ENCODE measurements at regions of chr1 and their contacts with region 1.

Region 1: DNA sequence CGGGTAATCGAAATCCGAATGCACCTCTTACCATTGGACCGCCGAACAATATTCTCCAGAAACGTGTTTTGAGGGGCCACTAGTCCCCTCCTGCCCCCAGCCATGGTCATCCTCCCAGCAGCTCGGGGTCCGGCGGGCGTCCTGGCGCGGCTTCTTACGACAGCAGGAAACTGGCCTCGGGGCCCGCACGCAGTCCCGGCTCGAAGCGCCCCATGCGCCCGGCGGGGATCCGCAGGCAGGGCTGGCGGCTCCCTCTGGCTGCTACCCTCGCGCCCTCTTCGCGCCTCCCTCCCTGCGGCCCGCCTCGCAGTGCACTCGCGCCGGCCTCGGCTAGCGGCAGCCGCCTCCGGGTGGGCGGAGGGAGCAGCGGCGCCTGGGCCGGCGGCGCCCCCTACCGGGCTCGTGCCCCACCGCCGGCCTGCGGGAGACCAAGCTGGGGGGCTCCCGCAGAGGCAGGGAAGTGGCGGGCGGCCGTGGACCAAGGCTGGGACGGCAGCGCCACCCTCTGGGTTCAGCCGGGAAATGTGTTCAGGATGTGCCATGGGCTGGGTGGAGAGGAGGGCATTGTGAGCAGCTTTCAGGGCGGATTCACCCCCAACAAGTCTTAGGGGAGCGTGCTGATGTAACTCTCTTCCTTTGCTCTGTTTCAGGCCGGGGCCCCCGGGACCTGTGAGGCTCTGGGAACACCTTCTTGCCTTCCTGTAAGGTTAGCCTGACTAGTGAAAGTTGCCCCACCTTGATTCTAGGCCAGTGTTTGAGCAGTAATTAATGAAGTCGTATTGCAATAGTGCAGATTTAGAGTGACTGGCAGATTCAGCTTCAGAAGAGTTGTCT is at the start of gene KCNH1:
- DNase-seq: peak; percentile 78 to 86
- ATAC-seq: peak; percentile 95
- H3K4me3 ChIP-seq: peak within 1 kb of the TSS; percentile 67
- H3K27ac ChIP-seq: peak within 1 kb of the TSS; percentile 89 to 93
- H3K4me1 ChIP-seq: peaks cover 20% of the 10 kb centered on the region
- CTCF ChIP-seq: peak; percentile 100
- EP300 ChIP-seq: peak in 1 of 2 experiments; percentile 32; a peak in 1 of 5 replicates
- POLR2A ChIP-seq: no peak
- RAD21 ChIP-seq: peak; percentile 96 to 100
- polyA plus RNA-seq, gene KCNH1: 7.9 and 8.4 TPM in 2 replicates

Region 2: GRCh38 chr1:210400043-210400840 is 733.8 kb before region 1 on chr1:
- CTCF ChIA-PET with region 1: interaction called, 388 read pairs
- POLR2A ChIA-PET with region 1: no interaction called
- DNase-seq: peak; percentile 71 to 88
- ATAC-seq: peak; percentile 98 to 100
- H3K4me3 ChIP-seq: no peak overlapping the region
- H3K27ac ChIP-seq: no peak overlapping the region
- H3K4me1 ChIP-seq: no peaks in the 10 kb centered on the region; the same call in 2 of the 3 replicates
- CTCF ChIP-seq: peak; percentile 87
- EP300 ChIP-seq: no peak
- POLR2A ChIP-seq: no peak
- RAD21 ChIP-seq: peak; percentile 85 to 88

Region 3: GRCh38 chr1:210448297-210448892 is 685.7 kb before region 1 on chr1:
- CTCF ChIA-PET with region 1: interaction called, 270 read pairs
- POLR2A ChIA-PET with region 1: interaction called, 15 read pairs
- DNase-seq: peak; percentile 36 to 58
- ATAC-seq: peak; percentile 59 to 90; a peak in 4 of 6 replicates
- H3K4me3 ChIP-seq: no peak overlapping the region
- H3K27ac ChIP-seq: peak overlapping the region; percentile 18 to 72; a peak in 4 of 6 replicates
- H3K4me1 ChIP-seq: peaks cover 30% of the 10 kb centered on the region
- CTCF ChIP-seq: peak; percentile 89
- EP300 ChIP-seq: no peak
- POLR2A ChIP-seq: no peak
- RAD21 ChIP-seq: peak; percentile 92

Region 4: GRCh38 chr1:210568631-210569030 is 565.4 kb before region 1 on chr1:
- CTCF ChIA-PET with region 1: interaction called, 34 read pairs
- POLR2A ChIA-PET with region 1: no interaction called
- DNase-seq: peak in 1 of 2 experiments; percentile 29
- ATAC-seq: no peak
- H3K4me3 ChIP-seq: no peak overlapping the region
- H3K27ac ChIP-seq: peak overlapping the region; percentile 24 to 26; a peak in 2 of 6 replicates
- H3K4me1 ChIP-seq: peaks cover 6% of the 10 kb centered on the region
- CTCF ChIP-seq: no peak
- EP300 ChIP-seq: no peak
- POLR2A ChIP-seq: no peak
- RAD21 ChIP-seq: no peak

Region 5: GRCh38 chr1:210696709-210697108 is 437.3 kb before region 1 on chr1:
- CTCF ChIA-PET with region 1: interaction called, 15 read pairs
- POLR2A ChIA-PET with region 1: no interaction called
- DNase-seq: no peak
- ATAC-seq: peak in 1 of 2 experiments; percentile 52; a peak in 2 of 6 replicates
- H3K4me3 ChIP-seq: no peak overlapping the region
- H3K27ac ChIP-seq: peak overlapping the region in 1 of 2 experiments; percentile 34; a peak in 1 of 6 replicates
- H3K4me1 ChIP-seq: peaks cover 17% of the 10 kb centered on the region; the same call in 2 of the 3 replicates
- CTCF ChIP-seq: no peak
- EP300 ChIP-seq: no peak
- POLR2A ChIP-seq: no peak
- RAD21 ChIP-seq: no peak

Region 6: GRCh38 chr1:211118407-211119102 is 15.5 kb before region 1 on chr1:
- CTCF ChIA-PET with region 1: interaction called, 38 read pairs
- POLR2A ChIA-PET with region 1: no interaction called
- DNase-seq: no peak
- ATAC-seq: peak in 1 of 2 experiments; percentile 55; a peak in 2 of 6 replicates
- H3K4me3 ChIP-seq: no peak overlapping the region
- H3K27ac ChIP-seq: no peak overlapping the region
- H3K4me1 ChIP-seq: peaks cover 20% of the 10 kb centered on the region
- CTCF ChIP-seq: no peak
- EP300 ChIP-seq: no peak
- POLR2A ChIP-seq: no peak
- RAD21 ChIP-seq: no peak

Region 7: DNA sequence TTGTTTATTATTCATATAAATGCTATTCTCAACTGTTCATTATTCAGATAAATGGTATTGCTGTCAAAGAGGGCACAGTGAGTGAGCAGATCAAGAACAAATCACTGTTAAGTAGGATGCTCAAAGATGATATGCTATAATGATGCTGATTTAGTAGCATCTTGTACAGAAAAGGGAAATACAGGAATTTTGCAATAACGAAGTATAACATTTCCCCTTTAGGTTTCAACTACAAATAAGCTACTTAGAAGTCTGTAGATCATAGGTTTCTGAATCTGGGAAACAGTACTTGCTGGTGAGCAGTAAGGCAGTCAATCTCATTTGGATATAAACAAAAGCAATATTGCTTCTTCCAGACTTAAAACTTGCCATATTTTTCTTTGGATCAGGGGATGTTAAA is 97.8 kb after region 1 on chr1:
- CTCF ChIA-PET with region 1: no interaction called
- POLR2A ChIA-PET with region 1: no interaction called
- DNase-seq: no peak
- ATAC-seq: no peak
- H3K4me3 ChIP-seq: no peak overlapping the region
- H3K27ac ChIP-seq: no peak overlapping the region
- H3K4me1 ChIP-seq: 0 out of 3 replicates have a peak, but pooled peaks cover 3% of the 10 kb centered on the region
- CTCF ChIP-seq: no peak
- EP300 ChIP-seq: no peak
- POLR2A ChIP-seq: no peak
- RAD21 ChIP-seq: no peak

Measured in A549 (cell line).